K562 (cell line): ENCODE measurements at regions of chr2 and their contacts with region 1.

Region 1: DNA sequence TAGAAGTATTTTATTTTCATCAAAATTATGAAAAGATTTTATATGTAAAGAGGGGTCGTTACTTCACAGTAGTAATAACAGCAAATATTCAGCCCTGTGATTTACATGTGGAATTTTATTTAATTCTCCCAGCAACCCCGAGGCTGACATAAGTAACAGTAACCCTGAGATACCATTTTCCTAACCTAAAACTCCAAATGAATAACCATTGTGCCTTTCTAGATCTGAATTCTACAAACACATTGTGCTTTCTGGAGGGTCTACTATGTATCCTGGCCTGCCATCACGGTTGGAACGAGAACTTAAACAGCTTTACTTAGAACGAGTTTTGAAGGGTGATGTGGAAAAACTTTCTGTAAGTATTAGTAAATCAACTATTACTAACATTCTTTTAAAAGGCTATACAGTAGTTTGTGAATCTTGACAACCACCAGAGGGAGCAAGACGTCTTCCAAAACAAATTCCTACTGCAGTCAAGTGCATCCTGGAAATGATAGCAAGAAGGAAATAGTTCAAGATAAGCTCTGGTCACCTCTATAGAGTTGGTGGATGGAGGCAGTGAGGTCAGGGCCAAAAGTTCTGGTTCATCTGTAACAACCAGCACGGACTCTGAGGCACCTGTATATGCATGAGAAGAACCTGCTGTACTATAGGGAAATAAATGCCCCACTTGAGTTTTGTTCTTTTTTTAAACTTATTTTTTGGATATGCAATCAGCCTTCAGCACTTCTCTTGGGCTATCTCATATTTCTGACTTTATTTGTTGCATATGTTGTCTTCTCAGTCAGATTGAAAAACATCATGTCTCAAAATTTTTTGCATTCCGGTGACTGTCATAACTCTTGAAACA is 37.4 kb downstream of the ACTR2 start:
- DNase-seq: peak; percentile 25 to 83 (median 32)
- ATAC-seq: peak; percentile 89
- H3K4me3 ChIP-seq: no peak overlapping the region
- H3K27ac ChIP-seq: no peak overlapping the region
- H3K4me1 ChIP-seq: no peaks in the 10 kb centered on the region; a peak in 1 of 5 replicates
- H3K27me3 ChIP-seq: no peaks in the 10 kb centered on the region
- CTCF ChIP-seq: peak; percentile 48 to 81 (median 70); a peak in 5 of 6 replicates
- EP300 ChIP-seq: no peak
- POLR2A ChIP-seq: no peak
- RAD21 ChIP-seq: peak; percentile 88 to 94

Region 2: GRCh38 chr2:65382776-65383357 is 117.8 kb after region 1 on chr2:
- CTCF ChIA-PET with region 1: interaction called, 3 read pairs
- POLR2A ChIA-PET with region 1: no interaction called
- in situ Hi-C with region 1: no loop called
- intact Hi-C with region 1: loop called (anchors 5 kb)
- DNase-seq: peak; percentile 85 to 97 (median 87)
- ATAC-seq: peak; percentile 86
- H3K4me3 ChIP-seq: no peak overlapping the region; the same call in 1 of the 2 replicates
- H3K27ac ChIP-seq: peak overlapping the region; percentile 69
- H3K4me1 ChIP-seq: peaks cover 27 to 81% of the 10 kb centered on the region in 2 experiments
- H3K27me3 ChIP-seq: no peaks in the 10 kb centered on the region
- CTCF ChIP-seq: peak; percentile 35 to 56 (median 54); a peak in 4 of 6 replicates
- EP300 ChIP-seq: peak; percentile 47; the same call in 1 of the 2 replicates
- POLR2A ChIP-seq: no peak
- RAD21 ChIP-seq: peak; percentile 28 to 55; a peak in 2 of 4 replicates

Region 3: GRCh38 chr2:65545837-65546805 is 281.1 kb after region 1 on chr2:
- CTCF ChIA-PET with region 1: no interaction called
- POLR2A ChIA-PET with region 1: no interaction called
- in situ Hi-C with region 1: loop called (anchors 5 kb)
- intact Hi-C with region 1: no loop called
- DNase-seq: no peak
- ATAC-seq: no peak
- H3K4me3 ChIP-seq: no peak overlapping the region
- H3K27ac ChIP-seq: no peak overlapping the region
- H3K4me1 ChIP-seq: no peaks in the 10 kb centered on the region; a peak in 1 of 5 replicates
- H3K27me3 ChIP-seq: no peaks in the 10 kb centered on the region
- CTCF ChIP-seq: no peak
- EP300 ChIP-seq: no peak
- POLR2A ChIP-seq: no peak
- RAD21 ChIP-seq: no peak

Region 4: GRCh38 chr2:65554765-65555591 is 289.9 kb after region 1 on chr2:
- CTCF ChIA-PET with region 1: interaction called, 12 read pairs
- POLR2A ChIA-PET with region 1: no interaction called
- in situ Hi-C with region 1: no loop called
- intact Hi-C with region 1: loop called (anchors 1 kb)
- DNase-seq: peak in 3 of 4 experiments; percentile 23 to 50 (median 30)
- ATAC-seq: no peak
- H3K4me3 ChIP-seq: no peak overlapping the region
- H3K27ac ChIP-seq: no peak overlapping the region
- H3K4me1 ChIP-seq: peaks cover 11 to 14% of the 10 kb centered on the region in 2 experiments; a peak in 4 of 5 replicates
- H3K27me3 ChIP-seq: no peaks in the 10 kb centered on the region
- CTCF ChIP-seq: no peak
- EP300 ChIP-seq: no peak
- POLR2A ChIP-seq: no peak
- RAD21 ChIP-seq: no peak

Region 5: GRCh38 chr2:65576861-65577601 is 312.0 kb after region 1 on chr2:
- CTCF ChIA-PET with region 1: interaction called, 15 read pairs
- POLR2A ChIA-PET with region 1: interaction called, 3 read pairs
- in situ Hi-C with region 1: no loop called
- intact Hi-C with region 1: loop called (anchors 1 kb)
- DNase-seq: peak in 1 of 4 experiments; percentile 52
- ATAC-seq: peak; percentile 53; the same call in 2 of the 3 replicates
- H3K4me3 ChIP-seq: no peak overlapping the region
- H3K27ac ChIP-seq: no peak overlapping the region
- H3K4me1 ChIP-seq: peaks cover 2 to 4% of the 10 kb centered on the region in 2 experiments; a peak in 3 of 5 replicates
- H3K27me3 ChIP-seq: peaks cover 3 to 12% of the 10 kb centered on the region in 2 experiments; a peak in 4 of 5 replicates
- CTCF ChIP-seq: no peak
- EP300 ChIP-seq: no peak
- POLR2A ChIP-seq: no peak
- RAD21 ChIP-seq: no peak